ENCODE measurements at regions of chr3 and their contacts with region 1.

Region 1: GRCh38 chr3:47781685-47782445 is at the start of gene SMARCC1:
- DNase-seq: peak; percentile 94 to 97
- H3K4me3 ChIP-seq: peak within 1 kb of the TSS; percentile 80 to 99 (median 94)
- H3K27ac ChIP-seq: peak within 1 kb of the TSS; percentile 97
- H3K4me1 ChIP-seq: peaks cover 0 to 16% of the 10 kb centered on the region in 2 donors
- H3K27me3 ChIP-seq: no peaks in the 10 kb centered on the region
- CTCF ChIP-seq: peak; percentile 23 to 29 (median 27)
- POLR2A ChIP-seq: peak; percentile 83
- total RNA-seq, gene SMARCC1: 27.4 to 63.2 (median 61.9) TPM

Region 2: GRCh38 chr3:47522082-47522987 is 259.5 kb before region 1 on chr3:
- intact Hi-C with region 1: loop called (anchors 5 kb)
- DNase-seq: peak; percentile 72 to 79
- H3K4me3 ChIP-seq: no peak overlapping the region
- H3K27ac ChIP-seq: no peak overlapping the region
- H3K4me1 ChIP-seq: no peaks in the 10 kb centered on the region
- H3K27me3 ChIP-seq: no peaks in the 10 kb centered on the region
- CTCF ChIP-seq: peak; percentile 72 to 95 (median 95)
- POLR2A ChIP-seq: no peak

Measured in breast epithelium (tissue), 4 donors.